ENCODE measurements at regions of chr6 and their contacts with region 1.

Region 1: DNA sequence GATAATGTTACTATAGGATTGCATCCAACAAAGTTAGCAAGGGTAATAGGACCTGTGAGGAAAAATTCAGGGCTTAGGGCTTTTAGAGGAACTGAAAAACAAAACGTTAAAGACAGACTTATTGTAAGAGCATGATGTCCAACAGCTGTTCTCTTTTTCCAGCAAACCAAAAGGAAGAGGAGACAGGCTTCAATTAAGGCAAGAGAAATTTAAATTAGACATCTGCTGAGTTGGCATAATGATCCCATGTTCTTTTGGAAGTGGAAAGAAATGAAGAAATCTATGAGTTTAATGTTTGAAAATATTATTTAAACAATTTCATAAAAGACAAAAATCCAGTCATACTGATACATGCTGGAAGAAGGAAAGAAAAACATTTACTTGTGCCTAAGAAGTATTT is 95.7 kb upstream of the HMGCLL1 start:
- DNase-seq: no peak
- ATAC-seq: no peak
- H3K4me3 ChIP-seq: no peak overlapping the region
- H3K27ac ChIP-seq: no peak overlapping the region
- H3K4me1 ChIP-seq: peaks cover 0 to 5% (median 0%) of the 10 kb centered on the region in 12 donors
- H3K27me3 ChIP-seq: no peaks in the 10 kb centered on the region
- CTCF ChIP-seq: no peak
- POLR2A ChIP-seq: no peak

Region 2: GRCh38 chr6:55604021-55604420 is 70.7 kb before region 1 on chr6:
- intact Hi-C with region 1: loop called in 1 of 10 experiments (anchors 5 kb)
- DNase-seq: no peak
- ATAC-seq: no peak
- H3K4me3 ChIP-seq: no peak overlapping the region
- H3K27ac ChIP-seq: no peak overlapping the region
- H3K4me1 ChIP-seq: no peaks in the 10 kb centered on the region
- H3K27me3 ChIP-seq: no peaks in the 10 kb centered on the region
- CTCF ChIP-seq: no peak
- POLR2A ChIP-seq: no peak

Region 3: DNA sequence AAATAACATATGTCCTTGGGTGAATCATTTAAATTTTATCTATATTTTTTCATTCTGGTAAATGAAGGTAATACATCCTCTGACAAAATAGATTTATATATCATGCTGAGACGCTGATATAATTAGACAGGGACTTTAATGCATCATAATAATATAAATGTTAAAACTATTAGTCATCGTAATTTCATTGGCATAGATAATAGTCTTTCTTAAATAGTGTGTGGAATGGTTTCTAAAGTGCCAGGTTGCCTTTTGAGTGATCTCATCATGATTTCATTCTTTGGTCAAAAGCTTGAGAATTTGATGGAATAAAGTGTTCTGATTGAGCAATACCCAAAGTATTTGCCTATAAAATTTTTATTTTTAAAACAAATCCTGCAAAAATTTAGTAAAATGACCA is 244.0 kb after region 1 on chr6:
- intact Hi-C with region 1: no loop called
- DNase-seq: no peak
- ATAC-seq: no peak
- H3K4me3 ChIP-seq: no peak overlapping the region
- H3K27ac ChIP-seq: peak overlapping the region in 2 of 12 donors; percentile 18 to 39
- H3K4me1 ChIP-seq: peaks cover 0 to 4% (median 0%) of the 10 kb centered on the region in 12 donors
- H3K27me3 ChIP-seq: no peaks in the 10 kb centered on the region
- CTCF ChIP-seq: no peak
- POLR2A ChIP-seq: no peak

Measured in heart left ventricle (tissue), 16 donors.